HEK293 (cell line): ENCODE measurements at regions of chr14 and their contacts with region 1.

Region 1: DNA sequence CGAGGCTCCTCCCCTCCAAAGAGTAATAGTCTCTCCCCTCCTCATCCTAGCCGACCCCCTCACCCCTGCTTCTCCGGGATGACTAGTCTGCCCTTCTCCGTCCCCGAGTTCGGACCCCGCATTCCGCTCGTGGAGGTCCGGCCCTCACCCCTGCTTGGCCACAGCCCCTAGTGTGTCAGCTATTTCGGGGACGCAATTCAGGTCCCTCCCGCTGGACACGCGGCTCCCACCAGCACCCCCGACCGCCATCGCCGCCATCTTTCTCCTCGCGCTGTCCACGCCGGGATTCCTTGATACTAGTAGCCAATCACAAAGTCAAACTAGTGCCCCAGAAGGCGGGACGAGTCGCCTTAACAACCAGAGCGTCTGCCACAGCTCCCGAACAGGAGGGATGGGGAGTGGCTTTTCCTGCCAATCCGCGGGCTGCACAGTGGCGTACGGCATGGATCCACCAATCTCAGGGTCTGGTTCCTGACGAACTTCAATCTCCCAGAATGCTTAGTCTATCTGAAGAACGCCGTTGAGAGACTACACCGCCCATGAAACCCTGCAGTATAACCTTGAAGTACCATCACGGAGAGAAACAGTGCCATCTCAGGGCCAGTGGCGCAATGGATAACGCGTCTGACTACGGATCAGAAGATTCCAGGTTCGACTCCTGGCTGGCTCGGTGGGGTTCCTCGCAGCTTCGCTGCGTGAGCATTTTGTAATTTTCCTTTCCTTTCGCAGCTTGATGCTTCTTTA is at the start of gene PRMT5:
- H3K4me3 ChIP-seq: peak within 1 kb of the TSS; percentile 78
- H3K27ac ChIP-seq: peak within 1 kb of the TSS; percentile 55; the same call in 1 of the 2 replicates
- H3K4me1 ChIP-seq: no peaks in the 10 kb centered on the region
- CTCF ChIP-seq: no peak

Region 2: GRCh38 chr14:22811722-22812121 is 117.6 kb before region 1 on chr14:
- CTCF ChIA-PET with region 1: no interaction called
- POLR2A ChIA-PET with region 1: no interaction called
- H3K4me3 ChIP-seq: no peak overlapping the region
- H3K27ac ChIP-seq: no peak overlapping the region
- H3K4me1 ChIP-seq: no peaks in the 10 kb centered on the region
- CTCF ChIP-seq: no peak

Region 3: DNA sequence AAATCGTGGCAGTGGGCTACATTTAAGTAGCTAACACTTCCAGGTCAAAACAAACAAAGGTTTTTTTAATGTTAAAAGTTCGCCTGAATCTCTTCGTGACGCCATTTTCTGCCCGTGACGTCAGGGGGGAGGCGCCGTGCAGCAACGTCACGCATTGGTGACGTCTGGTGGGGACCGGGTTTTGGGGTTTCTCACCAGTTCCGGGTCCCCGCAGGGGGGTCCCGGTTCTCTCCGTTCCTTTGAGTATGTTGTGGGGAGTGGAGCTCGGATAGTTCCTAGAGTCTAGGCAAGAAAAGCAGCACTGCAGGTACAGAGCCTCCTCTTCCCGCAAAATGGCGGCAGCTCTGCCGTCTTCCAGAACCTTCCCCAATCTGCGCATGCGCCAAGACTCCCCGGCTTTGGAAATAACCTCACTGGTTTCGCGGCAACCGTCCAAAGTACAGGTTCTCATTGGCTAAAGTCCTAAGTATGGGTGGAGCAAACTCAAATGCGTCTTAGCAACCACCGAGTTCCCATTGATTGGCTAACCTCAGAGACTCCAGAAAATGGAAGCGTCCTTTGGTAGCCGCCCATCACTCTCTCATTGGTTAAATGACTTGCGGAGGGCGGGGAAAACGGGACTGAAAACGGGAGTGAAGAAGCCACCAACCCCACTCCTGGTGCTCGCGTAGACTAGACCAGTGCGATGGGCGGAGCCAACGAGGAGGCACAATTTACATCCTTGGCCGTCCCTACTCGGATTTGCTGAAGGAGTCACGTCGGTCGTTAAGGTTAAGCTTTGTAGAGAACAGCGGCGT is 10.3 kb before region 1 on chr14 and contains the start of gene RBM23:
- CTCF ChIA-PET with region 1: interaction called, 33 read pairs
- POLR2A ChIA-PET with region 1: interaction called, 41 read pairs
- H3K4me3 ChIP-seq: peak within 1 kb of the TSS; percentile 87
- H3K27ac ChIP-seq: peak within 1 kb of the TSS; percentile 77
- H3K4me1 ChIP-seq: peaks cover 5% of the 10 kb centered on the region; the same call in 1 of the 2 replicates
- CTCF ChIP-seq: no peak

Region 4: GRCh38 chr14:22945642-22946041 is 16.4 kb after region 1 on chr14:
- CTCF ChIA-PET with region 1: interaction called, 32 read pairs
- POLR2A ChIA-PET with region 1: interaction called, 4 read pairs
- H3K4me3 ChIP-seq: no peak overlapping the region
- H3K27ac ChIP-seq: no peak overlapping the region
- H3K4me1 ChIP-seq: no peaks in the 10 kb centered on the region
- CTCF ChIP-seq: no peak

Region 5: GRCh38 chr14:22973217-22974032 is 44.1 kb after region 1 on chr14:
- CTCF ChIA-PET with region 1: interaction called, 15 read pairs
- POLR2A ChIA-PET with region 1: interaction called, 7 read pairs
- H3K4me3 ChIP-seq: no peak overlapping the region
- H3K27ac ChIP-seq: no peak overlapping the region
- H3K4me1 ChIP-seq: peaks cover 20% of the 10 kb centered on the region
- CTCF ChIP-seq: peak; percentile 63

Region 6: GRCh38 chr14:23057757-23058653 is 128.7 kb after region 1 on chr14:
- CTCF ChIA-PET with region 1: interaction called, 12 read pairs
- POLR2A ChIA-PET with region 1: interaction called, 7 read pairs
- H3K4me3 ChIP-seq: peak overlapping the region; percentile 65
- H3K27ac ChIP-seq: peak overlapping the region; percentile 73
- H3K4me1 ChIP-seq: peaks cover 4% of the 10 kb centered on the region; the same call in 1 of the 2 replicates
- CTCF ChIP-seq: peak; percentile 96

Region 7: DNA sequence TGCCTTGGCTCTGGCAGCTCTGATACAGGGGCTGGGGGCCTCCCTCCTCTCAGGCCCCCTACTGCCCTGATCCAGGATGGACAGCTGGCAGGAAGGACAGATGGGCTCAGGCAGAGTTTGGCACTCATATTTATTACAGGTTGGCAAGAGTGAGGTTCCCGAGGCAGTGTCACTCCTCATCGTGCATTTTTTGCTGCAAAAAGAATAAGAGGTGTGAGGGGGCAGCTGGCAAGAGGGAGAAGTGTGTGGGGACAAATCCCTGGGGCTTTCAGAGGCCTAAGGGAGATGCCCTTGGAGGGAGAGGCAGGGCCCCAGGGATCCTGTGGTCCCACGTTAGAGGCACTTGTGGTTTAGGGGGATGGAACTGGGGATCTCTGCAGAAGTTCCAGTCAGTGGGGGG is 452.6 kb after region 1 on chr14:
- CTCF ChIA-PET with region 1: no interaction called
- POLR2A ChIA-PET with region 1: no interaction called
- H3K4me3 ChIP-seq: no peak overlapping the region
- H3K27ac ChIP-seq: no peak overlapping the region
- H3K4me1 ChIP-seq: no peaks in the 10 kb centered on the region
- CTCF ChIP-seq: no peak